ENCODE measurements at regions of chr9 and their contacts with region 1.

Region 1: DNA sequence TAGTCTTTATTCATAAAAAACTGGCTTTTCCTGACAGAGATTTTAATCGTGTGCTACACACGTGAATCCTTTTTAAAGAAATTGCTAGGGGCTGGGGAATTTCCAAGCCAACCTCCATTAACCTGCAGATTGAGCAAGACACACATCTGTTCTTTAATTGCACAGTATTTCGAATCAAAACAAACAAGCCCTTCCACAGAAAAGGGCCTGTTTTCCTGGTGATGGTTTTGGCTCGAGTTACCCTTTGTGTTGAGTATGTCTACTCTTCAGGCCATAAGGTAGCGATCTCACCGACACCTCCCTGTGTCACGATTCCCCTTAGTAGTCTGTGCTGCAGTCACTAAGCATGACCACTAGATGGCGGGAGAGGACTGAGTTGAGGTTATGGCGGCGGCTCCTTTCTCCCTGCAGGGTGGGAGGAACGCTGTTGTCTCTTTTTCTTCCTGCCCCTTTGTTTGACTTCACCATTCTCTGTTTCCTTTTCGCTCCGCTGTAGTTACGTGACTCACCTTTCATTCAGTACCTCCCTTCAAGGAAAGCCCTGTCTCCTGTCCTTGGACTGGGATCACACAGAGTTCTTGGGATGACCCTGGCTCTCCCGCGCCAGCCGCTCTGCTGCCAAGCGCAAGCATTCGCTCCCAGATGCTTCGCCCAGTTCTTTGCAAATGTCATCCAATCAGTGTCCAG is 137.1 kb upstream of the SLC24A2 start:
- DNase-seq: peak; percentile 52
- ATAC-seq: peak; percentile 87
- H3K4me3 ChIP-seq: peak overlapping the region in 1 of 2 experiments; percentile 23; a peak in 2 of 4 replicates
- H3K27ac ChIP-seq: no peak overlapping the region
- H3K4me1 ChIP-seq: no peaks in the 10 kb centered on the region
- H3K27me3 ChIP-seq: no peaks in the 10 kb centered on the region
- CTCF ChIP-seq: peak; percentile 77

Region 2: GRCh38 chr9:19493174-19493811 is 432.7 kb before region 1 on chr9:
- CTCF ChIA-PET with region 1: no interaction called
- POLR2A ChIA-PET with region 1: no interaction called
- in situ Hi-C with region 1: no loop called
- intact Hi-C with region 1: loop called (anchors 5 kb)
- DNase-seq: peak; percentile 45
- ATAC-seq: peak; percentile 63; the same call in 1 of the 2 replicates
- H3K4me3 ChIP-seq: no peak overlapping the region
- H3K27ac ChIP-seq: no peak overlapping the region
- H3K4me1 ChIP-seq: no peaks in the 10 kb centered on the region
- H3K27me3 ChIP-seq: no peaks in the 10 kb centered on the region
- CTCF ChIP-seq: peak; percentile 61

Region 3: DNA sequence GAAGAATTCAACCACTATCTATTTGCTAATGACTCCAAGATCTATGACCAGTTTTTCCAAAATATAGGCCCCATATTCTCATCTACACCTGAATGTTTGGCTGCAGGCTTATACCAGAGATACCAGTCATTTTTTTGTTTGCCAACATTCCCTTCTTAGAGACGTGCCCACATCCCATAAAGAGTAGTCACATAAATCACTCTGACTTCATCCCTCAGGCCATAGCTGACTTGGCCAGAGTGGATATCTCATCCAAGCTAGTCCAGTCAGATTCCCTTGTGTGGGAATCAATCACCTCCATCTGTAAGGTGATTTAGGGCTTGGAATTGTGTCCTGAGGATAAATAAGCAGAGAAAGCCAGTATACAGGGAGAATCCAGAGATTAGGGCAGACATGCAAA is 12.8 kb before region 1 on chr9:
- CTCF ChIA-PET with region 1: no interaction called
- POLR2A ChIA-PET with region 1: no interaction called
- in situ Hi-C with region 1: no loop called
- intact Hi-C with region 1: no loop called
- DNase-seq: no peak
- ATAC-seq: no peak
- H3K4me3 ChIP-seq: no peak overlapping the region
- H3K27ac ChIP-seq: no peak overlapping the region
- H3K4me1 ChIP-seq: no peaks in the 10 kb centered on the region
- H3K27me3 ChIP-seq: no peaks in the 10 kb centered on the region
- CTCF ChIP-seq: no peak

Region 4: GRCh38 chr9:19946441-19947109 is 20.6 kb after region 1 on chr9:
- CTCF ChIA-PET with region 1: no interaction called
- POLR2A ChIA-PET with region 1: no interaction called
- in situ Hi-C with region 1: no loop called
- intact Hi-C with region 1: no loop called
- DNase-seq: no peak
- ATAC-seq: no peak
- H3K4me3 ChIP-seq: no peak overlapping the region
- H3K27ac ChIP-seq: no peak overlapping the region
- H3K4me1 ChIP-seq: no peaks in the 10 kb centered on the region
- H3K27me3 ChIP-seq: no peaks in the 10 kb centered on the region
- CTCF ChIP-seq: no peak

Region 5: GRCh38 chr9:20611751-20612287 is 685.9 kb after region 1 on chr9:
- CTCF ChIA-PET with region 1: no interaction called
- POLR2A ChIA-PET with region 1: no interaction called
- in situ Hi-C with region 1: no loop called
- intact Hi-C with region 1: loop called (anchors 10 kb)
- DNase-seq: no peak
- ATAC-seq: no peak
- H3K4me3 ChIP-seq: no peak overlapping the region
- H3K27ac ChIP-seq: no peak overlapping the region
- H3K4me1 ChIP-seq: no peaks in the 10 kb centered on the region
- H3K27me3 ChIP-seq: no peaks in the 10 kb centered on the region
- CTCF ChIP-seq: no peak

Region 6: DNA sequence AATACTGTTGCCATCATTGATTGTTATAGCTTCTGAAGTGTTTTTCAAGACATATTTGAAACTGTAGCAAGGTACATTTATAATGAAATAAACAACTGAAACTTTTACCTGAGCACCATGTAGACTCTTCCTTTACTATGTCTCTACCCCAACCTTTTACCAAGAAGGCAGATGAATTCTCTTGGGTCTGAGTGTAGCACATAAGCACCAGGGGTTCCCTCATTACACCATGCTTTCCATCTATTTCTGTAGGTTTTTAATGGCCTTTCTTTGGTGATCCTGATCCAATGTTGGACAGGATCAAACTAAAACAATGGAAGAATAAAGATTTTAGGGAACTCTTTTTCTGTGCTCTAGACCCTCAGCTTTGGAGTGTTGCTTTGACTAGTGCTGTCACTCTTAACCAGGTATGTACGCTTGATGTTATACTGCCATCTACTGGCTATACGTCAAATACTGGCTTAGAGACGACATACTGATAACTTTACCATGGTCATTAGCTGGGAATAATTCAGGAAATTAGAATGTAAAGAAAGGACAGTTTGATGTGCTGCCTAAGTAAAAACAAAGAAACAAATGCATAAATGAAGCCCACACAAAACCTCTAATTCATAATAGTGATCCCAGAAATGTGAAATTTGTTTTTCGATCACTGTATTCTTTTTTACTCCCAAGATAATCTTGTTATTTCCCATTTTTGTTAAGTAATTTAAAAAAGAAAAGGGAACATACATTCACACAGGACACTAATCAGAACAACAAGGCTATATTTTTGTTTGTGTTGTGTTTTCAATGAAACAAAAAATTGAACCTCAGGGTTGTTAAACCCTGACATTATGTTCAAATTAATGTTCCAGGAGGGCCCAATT is 1185.0 kb after region 1 on chr9:
- CTCF ChIA-PET with region 1: no interaction called
- POLR2A ChIA-PET with region 1: no interaction called
- in situ Hi-C with region 1: no loop called
- intact Hi-C with region 1: loop called (anchors 5 kb)
- DNase-seq: peak; percentile 36
- ATAC-seq: peak; percentile 74; the same call in 1 of the 2 replicates
- H3K4me3 ChIP-seq: no peak overlapping the region
- H3K27ac ChIP-seq: no peak overlapping the region
- H3K4me1 ChIP-seq: no peaks in the 10 kb centered on the region
- H3K27me3 ChIP-seq: no peaks in the 10 kb centered on the region
- CTCF ChIP-seq: peak; percentile 51; the same call in 1 of the 2 replicates